K562 (cell line): ENCODE measurements at regions of chr6 and their contacts with region 1.

Region 1: GRCh38 chr6:137707590-137708360 is 159.3 kb upstream of the TNFAIP3 start:
- DNase-seq: peak; percentile 32 to 84 (median 60)
- ATAC-seq: peak; percentile 70
- H3K4me3 ChIP-seq: no peak overlapping the region
- H3K27ac ChIP-seq: no peak overlapping the region
- H3K4me1 ChIP-seq: peaks cover 0 to 10% of the 10 kb centered on the region in 2 experiments; a peak in 1 of 5 replicates
- H3K27me3 ChIP-seq: no peaks in the 10 kb centered on the region
- CTCF ChIP-seq: peak; percentile 83 to 98 (median 89)
- EP300 ChIP-seq: no peak
- POLR2A ChIP-seq: no peak
- RAD21 ChIP-seq: peak; percentile 98 to 99

Region 2: GRCh38 chr6:137351890-137352289 is 355.9 kb before region 1 on chr6:
- CTCF ChIA-PET with region 1: no interaction called
- POLR2A ChIA-PET with region 1: no interaction called
- in situ Hi-C with region 1: no loop called
- intact Hi-C with region 1: no loop called
- DNase-seq: peak in 1 of 4 experiments; percentile 14
- ATAC-seq: no peak
- H3K4me3 ChIP-seq: no peak overlapping the region
- H3K27ac ChIP-seq: no peak overlapping the region
- H3K4me1 ChIP-seq: no peaks in the 10 kb centered on the region
- H3K27me3 ChIP-seq: no peaks in the 10 kb centered on the region; a peak in 2 of 5 replicates
- CTCF ChIP-seq: no peak
- EP300 ChIP-seq: no peak
- POLR2A ChIP-seq: no peak
- RAD21 ChIP-seq: no peak

Region 3: DNA sequence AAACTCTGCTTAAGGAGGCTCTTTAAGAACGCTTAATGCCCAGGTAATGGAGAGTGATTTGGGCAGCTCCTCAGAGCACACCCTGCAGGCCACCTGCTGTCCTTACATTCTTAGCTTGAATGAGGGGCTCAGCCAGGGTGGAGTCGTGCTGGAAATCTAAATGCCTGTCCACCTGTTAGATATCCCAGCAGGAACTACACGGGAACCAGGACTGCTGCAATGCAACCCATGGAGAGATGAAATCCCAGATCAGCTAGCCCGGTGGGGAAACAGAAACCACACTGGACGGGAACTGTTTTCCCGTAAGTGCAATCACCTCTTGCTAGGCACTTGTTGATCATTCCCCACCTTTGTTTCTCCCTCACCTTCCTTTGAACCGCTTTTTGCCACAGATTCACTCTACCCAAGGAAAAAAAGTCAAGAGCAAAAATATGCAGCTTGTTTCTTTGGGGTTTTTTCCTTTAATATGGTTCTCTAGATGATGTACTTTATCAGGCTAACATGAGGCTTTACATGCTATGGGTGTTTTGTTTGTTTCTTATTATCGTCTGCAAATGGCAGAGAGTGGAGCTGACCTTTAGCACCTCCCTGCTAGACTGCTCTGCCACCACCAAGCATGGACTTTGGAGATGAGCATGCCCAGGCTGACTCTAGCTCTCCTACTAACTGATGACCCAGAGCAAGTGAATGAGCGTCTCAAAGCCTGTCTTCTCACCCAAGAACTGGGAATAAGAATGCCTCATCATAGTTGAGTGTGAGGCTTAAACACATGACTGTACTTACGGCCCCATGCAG is 33.4 kb after region 1 on chr6:
- CTCF ChIA-PET with region 1: interaction called, 3 read pairs
- POLR2A ChIA-PET with region 1: no interaction called
- in situ Hi-C with region 1: no loop called
- intact Hi-C with region 1: loop called (anchors 1 kb)
- DNase-seq: no peak
- ATAC-seq: peak; percentile 84
- H3K4me3 ChIP-seq: no peak overlapping the region
- H3K27ac ChIP-seq: no peak overlapping the region
- H3K4me1 ChIP-seq: no peaks in the 10 kb centered on the region; a peak in 1 of 5 replicates
- H3K27me3 ChIP-seq: peaks cover 8 to 20% of the 10 kb centered on the region in 2 experiments; a peak in 4 of 5 replicates
- CTCF ChIP-seq: peak; percentile 24 to 56 (median 43); a peak in 4 of 6 replicates
- EP300 ChIP-seq: no peak
- POLR2A ChIP-seq: no peak
- RAD21 ChIP-seq: peak in 1 of 2 experiments; percentile 15; a peak in 1 of 4 replicates

Region 4: DNA sequence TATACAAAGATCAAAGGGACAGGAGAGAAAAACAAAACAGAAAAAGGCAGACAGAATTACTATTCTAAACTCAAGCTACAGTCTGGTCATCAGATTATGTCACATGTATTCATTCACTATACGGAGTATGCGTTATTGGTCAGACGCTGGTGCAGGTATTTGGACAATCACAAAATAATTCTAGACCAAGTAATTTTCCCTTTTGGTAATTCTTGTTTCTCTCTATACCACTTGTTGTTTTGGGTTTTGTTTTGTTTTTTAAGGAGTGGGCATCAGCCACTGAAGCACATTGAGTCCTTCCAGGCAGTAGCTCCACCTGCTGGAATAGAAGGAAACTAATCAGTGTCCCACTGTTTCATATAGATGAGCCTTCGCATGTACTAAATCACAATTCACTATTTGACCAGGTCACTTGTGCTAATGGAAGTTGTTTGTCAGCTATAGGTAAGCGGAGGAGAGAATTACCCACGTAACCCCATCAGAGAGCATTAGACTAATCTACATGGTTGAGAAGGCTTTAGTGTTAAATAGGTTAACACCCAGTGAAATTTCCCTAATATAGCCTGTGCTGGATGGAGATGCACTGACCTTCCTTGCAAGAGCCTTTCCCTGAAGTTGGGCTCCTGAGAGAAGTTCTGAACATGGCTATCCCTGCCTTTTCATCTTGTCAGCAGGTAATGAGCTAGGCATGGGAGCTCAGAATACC is 237.2 kb after region 1 on chr6:
- CTCF ChIA-PET with region 1: interaction called, 27 read pairs
- POLR2A ChIA-PET with region 1: interaction called, 3 read pairs
- in situ Hi-C with region 1: loop called (anchors 10 kb)
- intact Hi-C with region 1: loop called (anchors 1 kb)
- DNase-seq: peak; percentile 52 to 67 (median 56)
- ATAC-seq: peak; percentile 92
- H3K4me3 ChIP-seq: no peak overlapping the region
- H3K27ac ChIP-seq: no peak overlapping the region
- H3K4me1 ChIP-seq: peaks cover 0 to 7% of the 10 kb centered on the region in 2 experiments; a peak in 2 of 5 replicates
- H3K27me3 ChIP-seq: no peaks in the 10 kb centered on the region
- CTCF ChIP-seq: peak; percentile 82 to 92 (median 84)
- EP300 ChIP-seq: no peak
- POLR2A ChIP-seq: no peak
- RAD21 ChIP-seq: peak; percentile 93 to 96

Region 5: GRCh38 chr6:137975188-137975940 is 267.6 kb after region 1 on chr6:
- CTCF ChIA-PET with region 1: interaction called, 19 read pairs
- POLR2A ChIA-PET with region 1: no interaction called
- in situ Hi-C with region 1: no loop called
- intact Hi-C with region 1: loop called (anchors 1 kb)
- DNase-seq: no peak
- ATAC-seq: peak; percentile 49; the same call in 2 of the 3 replicates
- H3K4me3 ChIP-seq: no peak overlapping the region
- H3K27ac ChIP-seq: no peak overlapping the region
- H3K4me1 ChIP-seq: peaks cover 5 to 15% of the 10 kb centered on the region in 2 experiments; a peak in 3 of 5 replicates
- H3K27me3 ChIP-seq: no peaks in the 10 kb centered on the region
- CTCF ChIP-seq: peak; percentile 29 to 70 (median 46); a peak in 3 of 6 replicates
- EP300 ChIP-seq: no peak
- POLR2A ChIP-seq: no peak
- RAD21 ChIP-seq: peak; percentile 83 to 89

Region 6: DNA sequence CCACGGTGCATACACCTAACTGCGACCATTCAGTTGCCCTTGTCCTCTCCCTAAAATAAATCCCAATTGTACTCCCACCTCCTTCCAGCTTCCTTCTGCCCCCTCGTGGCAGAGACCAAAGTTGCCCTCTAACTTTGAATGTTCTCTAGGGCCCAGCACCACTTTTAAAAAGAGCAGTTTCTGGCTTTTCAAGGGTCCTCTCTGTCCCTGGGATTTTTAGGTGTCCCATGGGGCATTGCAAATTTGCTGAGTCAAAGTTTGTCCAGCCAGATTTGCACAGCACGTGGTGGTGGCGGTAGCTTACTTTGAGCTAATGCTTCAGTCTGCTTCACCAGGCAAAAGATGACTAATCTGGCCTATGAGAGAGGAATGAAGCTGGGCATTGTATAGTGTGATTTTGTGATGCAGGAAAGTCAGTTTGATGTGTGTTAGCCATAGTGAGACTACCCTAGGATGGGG is 299.3 kb after region 1 on chr6:
- CTCF ChIA-PET with region 1: interaction called, 87 read pairs
- POLR2A ChIA-PET with region 1: interaction called, 4 read pairs
- in situ Hi-C with region 1: loop called (anchors 5 kb)
- intact Hi-C with region 1: loop called (anchors 1 kb)
- DNase-seq: peak; percentile 63 to 66 (median 65)
- ATAC-seq: peak; percentile 81
- H3K4me3 ChIP-seq: no peak overlapping the region
- H3K27ac ChIP-seq: no peak overlapping the region
- H3K4me1 ChIP-seq: peaks cover 5 to 6% of the 10 kb centered on the region in 2 experiments; a peak in 2 of 5 replicates
- H3K27me3 ChIP-seq: peaks cover 4 to 7% of the 10 kb centered on the region in 2 experiments; a peak in 2 of 5 replicates
- CTCF ChIP-seq: peak; percentile 76 to 82 (median 80)
- EP300 ChIP-seq: no peak
- POLR2A ChIP-seq: no peak
- RAD21 ChIP-seq: peak; percentile 54 to 76; a peak in 3 of 4 replicates